Naive thymus-derived CD8-positive, alpha-beta T cell (primary cell): ENCODE measurements at regions of chr17 and their contacts with region 1.

Region 1: DNA sequence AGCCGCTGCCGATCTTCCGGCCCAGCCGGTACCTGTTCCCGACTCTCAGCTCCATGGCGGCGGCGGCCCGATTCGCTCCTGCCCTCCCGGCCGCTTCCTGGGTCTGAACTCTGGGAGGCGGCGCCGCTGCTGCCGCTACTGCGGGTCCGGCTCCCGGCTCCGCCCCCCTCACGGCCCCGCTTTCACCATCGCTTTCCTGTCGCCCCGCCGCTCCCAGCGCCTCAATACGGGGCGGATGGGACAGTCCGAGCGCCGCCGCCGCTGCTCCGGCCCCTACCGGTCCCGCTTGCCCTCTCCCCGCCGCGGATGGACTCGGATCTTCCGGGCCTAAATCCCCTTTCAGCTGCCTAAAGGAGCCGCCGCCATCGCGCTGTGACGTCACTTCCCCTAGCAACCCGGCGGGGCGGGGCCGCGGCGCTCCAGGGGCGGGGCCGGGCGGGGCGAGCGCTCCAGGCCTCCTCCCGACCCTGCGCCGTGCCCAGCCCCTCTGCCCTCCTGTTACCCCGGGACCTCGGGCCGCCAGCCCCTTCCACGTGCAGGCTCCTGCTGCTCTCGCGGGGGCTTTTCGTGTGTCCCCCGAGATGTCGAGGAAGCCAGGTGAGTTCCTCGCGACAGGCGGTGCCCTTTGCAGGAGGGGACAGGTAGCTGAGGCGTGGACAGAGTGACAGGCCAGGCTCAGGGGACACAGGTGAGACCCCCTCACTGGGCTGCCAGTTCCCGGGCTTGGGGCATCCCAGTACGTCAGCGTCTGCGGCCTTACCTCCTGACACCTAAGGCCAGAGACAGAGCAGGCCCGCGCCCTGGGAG is at the start of gene CSNK1D:
- DNase-seq: peak; percentile 82 to 98 (median 92)
- ATAC-seq: peak; percentile 74 to 79
- H3K4me3 Mint-ChIP-seq: peak within 1 kb of the TSS; percentile 79 to 99 (median 96)
- H3K27ac Mint-ChIP-seq: peak within 1 kb of the TSS; percentile 93 to 99 (median 99)
- H3K4me1 Mint-ChIP-seq: peaks cover 21 to 49% (median 45%) of the 10 kb centered on the region in 4 donors
- H3K27me3 Mint-ChIP-seq: no peaks in the 10 kb centered on the region
- polyA plus RNA-seq, gene CSNK1D: 47.6 to 72.1 (median 48.6) TPM

Region 2: GRCh38 chr17:82257473-82257872 is 16.1 kb before region 1 on chr17:
- POLR2A ChIA-PET with region 1: no interaction called
- DNase-seq: peak; percentile 41 to 75 (median 60)
- ATAC-seq: peak; percentile 89 to 98
- H3K4me3 Mint-ChIP-seq: peak overlapping the region in 2 of 10 donors; percentile 33 to 47
- H3K27ac Mint-ChIP-seq: peak overlapping the region; percentile 80 to 98 (median 92)
- H3K4me1 Mint-ChIP-seq: peaks cover 27 to 52% (median 34%) of the 10 kb centered on the region in 4 donors
- H3K27me3 Mint-ChIP-seq: no peaks in the 10 kb centered on the region

Region 3: GRCh38 chr17:82292251-82293154 is 19.0 kb after region 1 on chr17:
- POLR2A ChIA-PET with region 1: interaction called, 50 read pairs
- DNase-seq: peak; percentile 83 to 97 (median 91)
- ATAC-seq: peak; percentile 91
- H3K4me3 Mint-ChIP-seq: peak overlapping the region; percentile 82 to 93 (median 88)
- H3K27ac Mint-ChIP-seq: peak overlapping the region; percentile 71 to 96 (median 94)
- H3K4me1 Mint-ChIP-seq: peaks cover 27 to 46% (median 43%) of the 10 kb centered on the region in 4 donors
- H3K27me3 Mint-ChIP-seq: no peaks in the 10 kb centered on the region